IMR-90 (cell line): ENCODE measurements at regions of chr2 and their contacts with region 1.

Region 1: DNA sequence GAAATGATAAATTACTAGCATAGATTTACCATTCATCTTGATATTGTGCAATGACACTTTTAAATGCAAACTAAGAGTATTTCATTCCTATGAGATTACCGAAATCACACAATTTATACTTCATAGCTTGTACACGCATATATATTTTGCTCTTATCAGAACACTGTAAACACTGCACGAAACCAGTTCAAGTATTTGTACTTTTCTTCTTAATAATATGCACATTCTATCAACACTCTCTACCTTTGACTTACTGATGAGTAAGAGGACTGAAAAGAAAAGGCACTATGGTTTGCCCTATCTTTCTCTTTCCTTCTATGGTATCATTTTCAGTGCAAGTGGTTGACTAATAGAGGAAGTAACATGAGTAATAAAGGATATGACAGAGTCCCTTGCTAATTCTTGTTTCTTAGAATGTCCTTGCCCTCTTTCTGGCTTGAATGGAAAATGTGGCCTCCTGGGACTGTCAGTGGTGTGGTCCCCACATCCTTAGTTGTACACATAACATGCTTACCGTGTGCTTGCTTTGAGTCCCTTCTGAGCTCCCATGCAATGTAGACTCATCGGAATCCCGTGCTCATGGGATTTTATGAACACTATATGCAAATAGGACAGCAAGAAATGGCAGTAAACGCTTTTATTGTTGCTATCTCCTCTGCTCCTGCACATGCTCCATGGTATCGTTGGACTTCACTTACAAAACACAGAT is 363.5 kb upstream of the TNP1 start:
- DNase-seq: peak; percentile 99
- ATAC-seq: peak; percentile 85
- H3K4me3 ChIP-seq: no peak overlapping the region
- H3K27ac ChIP-seq: peak overlapping the region; percentile 99
- H3K4me1 ChIP-seq: peaks cover 35% of the 10 kb centered on the region
- H3K27me3 ChIP-seq: no peaks in the 10 kb centered on the region
- CTCF ChIP-seq: no peak
- POLR2A ChIP-seq: no peak
- RAD21 ChIP-seq: peak; percentile 28

Region 2: DNA sequence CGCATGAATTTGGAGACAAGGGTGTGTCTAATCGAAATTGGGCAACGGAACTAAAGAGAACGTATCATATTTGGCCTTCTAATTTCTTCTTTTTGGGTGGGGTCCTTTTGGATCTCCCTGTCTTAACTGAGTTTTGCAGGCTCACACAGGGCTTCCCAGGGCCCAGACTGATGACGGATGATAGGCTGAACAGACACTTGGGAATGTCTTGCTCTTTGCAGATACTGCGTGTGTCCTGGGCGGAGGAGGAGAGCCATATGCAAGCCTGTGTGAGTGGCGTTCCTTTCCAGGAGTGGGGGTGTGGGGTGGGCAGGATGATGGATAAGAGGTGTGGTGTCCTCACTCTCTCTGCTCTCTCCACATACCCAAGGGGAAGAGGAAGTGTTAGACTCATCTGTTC is 403.6 kb before region 1 on chr2:
- CTCF ChIA-PET with region 1: no interaction called
- POLR2A ChIA-PET with region 1: no interaction called
- dilution Hi-C with region 1: no loop called
- in situ Hi-C with region 1: no loop called
- intact Hi-C with region 1: no loop called
- DNase-seq: no peak
- ATAC-seq: no peak
- H3K4me3 ChIP-seq: no peak overlapping the region
- H3K27ac ChIP-seq: no peak overlapping the region
- H3K4me1 ChIP-seq: no peaks in the 10 kb centered on the region
- H3K27me3 ChIP-seq: peaks cover 22% of the 10 kb centered on the region
- CTCF ChIP-seq: no peak
- POLR2A ChIP-seq: no peak
- RAD21 ChIP-seq: no peak

Region 3: GRCh38 chr2:217105733-217106649 is 117.4 kb before region 1 on chr2:
- CTCF ChIA-PET with region 1: no interaction called
- POLR2A ChIA-PET with region 1: no interaction called
- dilution Hi-C with region 1: no loop called
- in situ Hi-C with region 1: no loop called
- intact Hi-C with region 1: loop called (anchors 1 kb)
- DNase-seq: peak; percentile 95
- ATAC-seq: peak; percentile 86
- H3K4me3 ChIP-seq: no peak overlapping the region
- H3K27ac ChIP-seq: peak overlapping the region; percentile 99
- H3K4me1 ChIP-seq: peaks cover 23% of the 10 kb centered on the region
- H3K27me3 ChIP-seq: no peaks in the 10 kb centered on the region
- CTCF ChIP-seq: no peak
- POLR2A ChIP-seq: peak; percentile 68; the same call in 1 of the 2 replicates
- RAD21 ChIP-seq: peak; percentile 11; the same call in 1 of the 2 replicates

Region 4: GRCh38 chr2:217277646-217278398 is 54.4 kb after region 1 on chr2:
- CTCF ChIA-PET with region 1: no interaction called
- POLR2A ChIA-PET with region 1: interaction called, 4 read pairs
- dilution Hi-C with region 1: no loop called
- in situ Hi-C with region 1: no loop called
- intact Hi-C with region 1: loop called (anchors 1 kb)
- DNase-seq: peak; percentile 100
- ATAC-seq: peak; percentile 77
- H3K4me3 ChIP-seq: peak overlapping the region; percentile 22; the same call in 1 of the 2 replicates
- H3K27ac ChIP-seq: peak overlapping the region; percentile 91
- H3K4me1 ChIP-seq: peaks cover 13% of the 10 kb centered on the region
- H3K27me3 ChIP-seq: no peaks in the 10 kb centered on the region
- CTCF ChIP-seq: no peak
- POLR2A ChIP-seq: peak; percentile 50; the same call in 1 of the 2 replicates
- RAD21 ChIP-seq: peak; percentile 20; the same call in 1 of the 2 replicates

Region 5: GRCh38 chr2:217338306-217338916 is 115.0 kb after region 1 on chr2:
- CTCF ChIA-PET with region 1: no interaction called
- POLR2A ChIA-PET with region 1: interaction called, 14 read pairs
- dilution Hi-C with region 1: no loop called
- in situ Hi-C with region 1: no loop called
- intact Hi-C with region 1: loop called (anchors 2 kb)
- DNase-seq: peak; percentile 96
- ATAC-seq: peak; percentile 73
- H3K4me3 ChIP-seq: no peak overlapping the region
- H3K27ac ChIP-seq: peak overlapping the region; percentile 100
- H3K4me1 ChIP-seq: peaks cover 12% of the 10 kb centered on the region
- H3K27me3 ChIP-seq: no peaks in the 10 kb centered on the region
- CTCF ChIP-seq: no peak
- POLR2A ChIP-seq: no peak
- RAD21 ChIP-seq: no peak